ENCODE measurements at regions of chr14 and their contacts with region 1.

Region 1: DNA sequence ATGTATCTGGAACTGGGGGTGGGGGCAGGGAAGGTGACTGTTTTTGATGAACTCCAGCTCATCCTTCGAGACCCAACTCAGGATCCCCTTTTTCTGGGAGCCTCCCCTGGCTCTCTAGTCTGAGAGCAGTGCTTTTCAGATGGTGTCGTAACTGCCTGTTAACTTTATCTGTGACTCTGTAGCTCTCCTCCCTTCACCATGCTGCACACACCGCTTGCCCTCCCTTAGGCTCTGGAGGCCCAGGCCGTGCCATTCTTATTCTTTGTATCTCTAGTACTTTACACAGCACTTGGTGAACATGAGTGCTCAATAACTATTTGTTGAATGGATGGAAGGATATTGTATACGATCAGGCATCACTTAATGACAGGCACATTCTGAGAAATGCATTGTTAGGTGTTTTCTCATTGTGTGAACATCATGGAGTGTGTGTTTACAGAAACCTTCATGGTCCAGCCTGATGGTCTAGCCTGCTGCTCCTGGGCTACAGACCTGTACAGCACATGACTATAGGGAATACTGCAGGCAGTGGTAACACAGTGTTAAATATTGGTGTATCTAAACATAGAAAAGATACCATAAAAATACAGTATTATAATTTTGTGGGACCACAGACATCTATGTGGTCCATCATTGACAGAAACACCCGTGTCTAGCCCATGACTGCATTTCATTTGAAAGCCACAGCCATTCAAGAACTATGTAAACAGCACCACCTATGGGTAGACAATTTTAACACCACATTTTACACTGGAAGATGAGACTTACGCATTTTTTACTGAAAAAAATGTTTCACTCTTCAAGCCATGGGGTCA is 91.8 kb downstream of the EML1 start:
- DNase-seq: peak in 2 of 5 donors; percentile 23 to 28
- H3K4me3 ChIP-seq: no peak overlapping the region
- H3K27ac ChIP-seq: no peak overlapping the region
- H3K4me1 ChIP-seq: no peaks in the 10 kb centered on the region
- H3K27me3 ChIP-seq: no peaks in the 10 kb centered on the region
- CTCF ChIP-seq: peak; percentile 69 to 78 (median 71)
- EP300 ChIP-seq: no peak
- POLR2A ChIP-seq: no peak

Region 2: GRCh38 chr14:99518441-99519346 is 366.3 kb before region 1 on chr14:
- intact Hi-C with region 1: loop called in 3 of 4 experiments (anchors 5 to 10 kb)
- DNase-seq: peak; percentile 59 to 88 (median 81)
- H3K4me3 ChIP-seq: no peak overlapping the region
- H3K27ac ChIP-seq: no peak overlapping the region
- H3K4me1 ChIP-seq: peaks cover 16% of the 10 kb centered on the region
- H3K27me3 ChIP-seq: no peaks in the 10 kb centered on the region
- CTCF ChIP-seq: peak; percentile 88 to 95 (median 91)
- EP300 ChIP-seq: no peak
- POLR2A ChIP-seq: no peak

Region 3: GRCh38 chr14:99524804-99525698 is 360.0 kb before region 1 on chr14:
- intact Hi-C with region 1: loop called in 1 of 4 experiments (anchors 10 kb)
- DNase-seq: peak in 1 of 5 donors; percentile 35
- H3K4me3 ChIP-seq: no peak overlapping the region
- H3K27ac ChIP-seq: no peak overlapping the region
- H3K4me1 ChIP-seq: peaks cover 18% of the 10 kb centered on the region
- H3K27me3 ChIP-seq: no peaks in the 10 kb centered on the region
- CTCF ChIP-seq: no peak
- EP300 ChIP-seq: no peak
- POLR2A ChIP-seq: no peak

Region 4: GRCh38 chr14:99683619-99684355 is 201.3 kb before region 1 on chr14 and contains the start of gene CYP46A1:
- intact Hi-C with region 1: loop called in 2 of 4 experiments (anchors 2 to 5 kb)
- DNase-seq: peak; percentile 100
- H3K4me3 ChIP-seq: peak within 1 kb of the TSS; percentile 91
- H3K27ac ChIP-seq: peak within 1 kb of the TSS; percentile 34 to 71
- H3K4me1 ChIP-seq: peaks cover 2% of the 10 kb centered on the region
- H3K27me3 ChIP-seq: no peaks in the 10 kb centered on the region
- CTCF ChIP-seq: peak in 1 of 3 donors; percentile 25
- EP300 ChIP-seq: no peak
- POLR2A ChIP-seq: peak; percentile 41
- total RNA-seq, gene CYP46A1: 0.48 to 4.9 (median 1.9) TPM

Region 5: DNA sequence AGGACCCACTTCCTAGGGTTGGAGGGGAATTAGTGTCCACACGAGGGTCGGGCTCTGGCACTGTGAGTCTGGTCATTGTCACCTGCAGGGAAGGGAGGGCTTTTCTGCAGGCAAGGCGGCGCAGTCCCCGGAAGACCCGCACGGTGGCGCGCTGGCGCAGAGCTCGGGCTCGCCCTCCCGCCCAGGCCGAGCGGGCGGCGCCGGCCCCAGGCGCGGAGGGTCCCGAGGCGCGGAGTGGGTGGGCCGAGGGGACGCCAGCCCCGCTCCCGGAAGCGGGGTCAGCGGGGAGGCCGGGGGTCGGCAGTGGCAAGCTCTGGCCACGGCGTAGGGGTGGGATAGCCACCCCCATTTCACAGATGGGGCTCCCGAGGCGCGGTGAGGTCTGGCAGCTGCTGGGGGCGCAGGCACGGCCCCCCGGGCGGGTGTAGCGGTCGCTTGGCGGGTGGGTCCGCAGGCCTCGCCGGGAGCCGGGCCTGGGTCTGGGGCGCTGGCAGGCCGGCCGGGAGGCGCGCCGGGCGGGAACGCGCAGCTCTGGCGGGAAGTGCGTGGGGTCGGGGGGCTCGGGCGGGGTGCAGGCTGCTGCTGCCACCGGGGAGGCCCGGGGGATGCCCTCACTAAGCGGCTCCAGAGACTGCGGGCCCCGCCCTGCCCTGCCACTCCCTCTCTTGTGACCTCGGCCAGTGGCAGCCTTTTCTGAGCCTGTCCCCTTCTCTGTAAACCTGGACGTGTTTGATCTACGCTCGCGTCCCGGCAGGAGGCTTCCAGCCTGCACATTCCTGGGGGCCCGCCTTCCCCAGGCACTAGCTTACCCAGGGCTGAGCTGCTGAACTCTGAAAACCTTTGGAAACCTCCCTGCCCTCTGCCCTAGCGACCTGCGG is 154.8 kb before region 1 on chr14:
- intact Hi-C with region 1: loop called (anchors 2 to 5 kb)
- DNase-seq: peak; percentile 49 to 82 (median 77)
- H3K4me3 ChIP-seq: peak overlapping the region; percentile 49
- H3K27ac ChIP-seq: no peak overlapping the region
- H3K4me1 ChIP-seq: peaks cover 9% of the 10 kb centered on the region
- H3K27me3 ChIP-seq: no peaks in the 10 kb centered on the region
- CTCF ChIP-seq: peak; percentile 80 to 87 (median 82)
- EP300 ChIP-seq: no peak
- POLR2A ChIP-seq: no peak

Measured in ovary (tissue), 10 donors.